ENCODE measurements at regions of chr5 and their contacts with region 1.

Region 1: DNA sequence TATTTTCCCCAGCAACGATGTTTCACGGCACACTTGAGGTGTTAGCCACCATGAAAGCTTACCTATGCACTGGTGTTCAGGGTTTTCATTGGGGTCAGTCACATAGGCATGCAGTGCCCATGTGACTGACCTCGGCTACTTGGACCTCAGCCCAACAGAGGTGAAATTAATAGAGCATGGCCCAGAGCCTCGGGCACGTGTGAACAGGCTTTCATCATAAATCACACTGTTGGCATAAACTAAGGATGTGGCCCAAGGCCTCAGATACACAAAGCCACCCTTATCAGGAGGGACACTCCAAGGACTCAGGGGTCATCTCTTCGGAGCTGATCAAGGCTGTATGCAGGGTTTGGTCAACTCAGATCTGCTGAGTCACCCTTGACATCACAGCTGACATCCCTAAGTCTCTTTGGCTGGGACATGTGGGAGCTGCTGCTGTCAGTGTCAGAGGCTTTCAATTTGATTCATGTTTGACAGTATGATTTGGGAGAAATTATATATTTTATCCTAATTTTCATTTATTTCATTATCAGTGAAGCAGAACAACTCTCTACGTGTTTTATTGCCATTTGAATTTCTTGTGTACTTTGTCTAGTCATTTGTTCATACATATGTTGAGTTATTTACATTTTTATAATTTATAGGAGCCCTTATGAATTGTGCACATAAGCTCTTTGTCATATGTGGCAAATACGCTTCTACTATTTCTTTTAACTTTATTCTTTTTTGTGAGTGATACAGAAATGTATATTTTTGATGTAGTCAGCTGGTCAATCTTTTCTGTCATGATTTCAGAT is 59.7 kb upstream of the ANKRD33B start:
- DNase-seq: no peak
- ATAC-seq: peak; percentile 66

Region 2: GRCh38 chr5:10441083-10441991 is 62.9 kb before region 1 on chr5 and contains the start of gene ROPN1L:
- intact Hi-C with region 1: no loop called
- DNase-seq: peak; percentile 93
- ATAC-seq: peak; percentile 98
- total RNA-seq, gene ROPN1L: not detected

Region 3: GRCh38 chr5:10460252-10460906 is 43.8 kb before region 1 on chr5:
- intact Hi-C with region 1: loop called (anchors 5 kb)
- DNase-seq: peak; percentile 91
- ATAC-seq: peak; percentile 86

Region 4: DNA sequence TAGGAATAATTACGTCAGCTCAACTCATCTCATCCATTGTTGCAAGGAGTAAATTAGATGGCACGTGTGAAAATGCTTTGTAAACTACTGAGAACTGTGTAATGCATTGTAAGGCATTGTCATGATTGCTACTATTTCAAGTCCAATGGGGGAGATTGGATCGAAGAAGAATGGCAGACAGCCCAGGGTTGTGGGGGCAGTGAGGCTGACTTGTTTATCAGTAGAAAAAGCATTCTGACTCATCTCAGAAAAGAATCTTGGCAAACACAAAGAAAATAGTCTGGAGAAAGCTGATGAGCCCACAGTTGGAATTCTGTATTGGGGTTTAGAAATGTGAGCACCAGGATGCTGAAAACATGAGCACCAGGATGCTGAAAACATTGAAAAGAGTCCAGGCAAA is 284.8 kb after region 1 on chr5:
- intact Hi-C with region 1: no loop called
- DNase-seq: no peak
- ATAC-seq: no peak